H1 (cell line): ENCODE measurements at regions of chr11 and their contacts with region 1.

Region 1: DNA sequence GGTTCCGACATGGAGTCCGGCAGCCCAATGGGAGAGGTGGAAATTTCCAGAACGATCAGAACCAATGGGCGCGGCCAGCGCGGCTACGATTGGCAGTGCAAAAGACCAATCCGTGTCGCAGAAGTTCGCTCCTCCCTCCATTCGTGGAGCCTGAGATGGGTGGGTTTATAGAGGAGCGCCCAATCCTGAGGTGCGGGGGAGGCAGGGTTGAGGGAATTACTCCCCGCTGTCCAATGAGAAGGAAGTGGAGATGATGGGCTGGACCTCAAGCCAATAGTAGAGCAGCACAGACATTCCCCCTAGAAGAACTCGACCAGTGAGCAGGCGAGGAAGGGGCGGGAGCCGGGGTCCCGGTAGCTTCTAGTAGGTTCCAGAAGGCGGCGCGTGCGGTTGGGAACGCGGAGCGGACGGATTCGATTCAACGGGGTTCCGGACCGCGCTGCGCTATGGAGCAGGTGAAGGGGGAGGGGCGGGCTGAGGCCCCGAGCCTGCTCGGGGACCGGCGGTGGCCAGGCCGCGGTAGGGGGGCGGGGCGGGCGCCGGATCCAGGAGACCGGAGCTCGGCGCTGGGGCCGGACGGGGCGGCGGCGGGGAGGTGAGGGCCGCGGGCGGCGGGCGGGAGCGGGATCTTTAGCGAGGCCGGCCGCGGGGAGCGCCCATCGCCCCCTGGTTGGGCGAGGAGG is at the start of gene STIP1:
- DNase-seq: peak; percentile 99 to 100
- H3K4me3 ChIP-seq: peak within 1 kb of the TSS; percentile 55 to 87 (median 77)
- H3K27ac ChIP-seq: peak within 1 kb of the TSS; percentile 87
- H3K4me1 ChIP-seq: peaks cover 0 to 9% (median 4%) of the 10 kb centered on the region in 4 experiments; a peak in 6 of 7 replicates
- H3K27me3 ChIP-seq: no peaks in the 10 kb centered on the region
- CTCF ChIP-seq: peak; percentile 35 to 50 (median 42)
- EP300 ChIP-seq: 0 out of 3 replicates have a peak, but pooled peaks of 1 of the 2 experiments have one; percentile 9
- POLR2A ChIP-seq: peak in 1 of 2 experiments; percentile 47; a peak in 2 of 3 replicates
- RAD21 ChIP-seq: peak in 1 of 2 experiments; percentile 23; a peak in 1 of 4 replicates
- total RNA-seq, gene STIP1: 316 and 329 TPM in 2 replicates

Region 2: DNA sequence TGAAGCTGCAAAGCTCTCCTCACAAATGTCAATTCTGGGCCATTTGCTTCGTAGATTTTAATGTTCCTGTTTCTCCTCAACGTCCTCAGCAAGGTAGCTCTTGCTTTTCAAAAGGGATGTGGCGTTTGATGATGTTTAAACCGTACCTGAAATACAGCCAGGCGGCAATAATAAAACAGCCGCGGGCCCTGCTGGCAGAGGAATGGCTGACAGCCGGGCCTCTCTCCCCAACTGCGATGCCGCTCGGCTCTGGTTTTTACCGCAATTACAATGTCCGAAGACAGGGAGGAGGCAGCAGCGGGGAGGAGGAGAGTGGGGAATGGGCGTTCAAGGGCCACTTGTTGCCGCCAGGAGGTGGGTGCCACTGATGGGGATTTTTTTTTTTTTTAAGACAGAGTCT is 47.6 kb before region 1 on chr11:
- CTCF ChIA-PET with region 1: no interaction called
- POLR2A ChIA-PET with region 1: no interaction called
- DNase-seq: no peak
- H3K4me3 ChIP-seq: no peak overlapping the region
- H3K27ac ChIP-seq: no peak overlapping the region
- H3K4me1 ChIP-seq: no peaks in the 10 kb centered on the region; a peak in 1 of 7 replicates
- H3K27me3 ChIP-seq: peaks cover 0 to 63% (median 24%) of the 10 kb centered on the region in 4 experiments; a peak in 6 of 7 replicates
- CTCF ChIP-seq: no peak
- EP300 ChIP-seq: no peak
- POLR2A ChIP-seq: no peak
- RAD21 ChIP-seq: no peak

Region 3: DNA sequence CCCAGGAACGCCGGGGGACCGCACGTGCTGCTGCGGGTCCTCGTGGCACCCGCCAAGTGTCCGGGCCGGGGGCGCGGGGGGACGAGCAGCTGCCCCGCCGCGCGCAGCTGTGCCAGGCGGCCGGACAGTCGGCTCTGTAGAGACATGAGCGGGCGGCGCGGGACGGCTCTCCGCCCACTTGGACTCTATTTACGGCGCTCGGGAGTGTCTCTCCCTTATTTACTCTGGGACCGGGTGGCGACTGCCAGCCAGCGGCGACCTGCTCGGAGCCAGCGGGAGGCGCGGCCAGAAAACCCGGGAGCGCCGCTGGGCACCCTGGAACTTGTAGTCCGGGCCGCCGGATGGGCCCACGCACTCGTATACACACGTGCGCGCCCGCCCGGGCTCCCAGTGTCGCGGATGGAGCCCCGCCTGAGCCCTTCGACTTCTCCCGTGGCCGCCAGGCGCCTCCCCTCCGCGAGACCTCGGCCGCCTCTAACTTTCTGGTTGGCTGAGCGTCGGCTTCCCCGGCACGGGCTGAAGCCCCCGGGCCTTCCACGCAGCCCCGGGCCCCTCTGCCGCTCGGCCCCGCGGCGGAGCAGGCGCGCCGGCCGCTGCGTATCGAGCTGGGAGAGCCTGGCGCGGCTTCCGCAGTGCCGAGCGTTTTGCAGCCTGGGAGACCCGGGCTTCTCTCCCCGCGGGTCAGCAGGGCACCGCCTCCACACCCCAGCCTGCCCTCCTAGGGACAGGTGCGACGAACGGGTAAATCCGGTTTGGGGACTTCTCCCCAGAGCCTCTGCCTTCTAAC is 19.9 kb before region 1 on chr11 and contains the start of gene MACROD1:
- CTCF ChIA-PET with region 1: interaction called, 4 read pairs
- POLR2A ChIA-PET with region 1: interaction called, 35 read pairs
- DNase-seq: peak in 1 of 2 experiments; percentile 84
- H3K4me3 ChIP-seq: peak within 1 kb of the TSS; percentile 52 to 77 (median 64)
- H3K27ac ChIP-seq: no peak within 1 kb of the TSS
- H3K4me1 ChIP-seq: peaks cover 0 to 11% (median 9%) of the 10 kb centered on the region in 4 experiments; a peak in 6 of 7 replicates
- H3K27me3 ChIP-seq: peaks cover 0 to 3% (median 0%) of the 10 kb centered on the region in 4 experiments; a peak in 2 of 7 replicates
- CTCF ChIP-seq: no peak
- EP300 ChIP-seq: peak in 1 of 2 experiments; percentile 60; a peak in 1 of 3 replicates
- POLR2A ChIP-seq: peak in 1 of 2 experiments; percentile 52; a peak in 1 of 3 replicates
- RAD21 ChIP-seq: peak in 1 of 2 experiments; percentile 9; a peak in 1 of 4 replicates
- total RNA-seq, gene MACROD1: 19.5 and 19.6 TPM in 2 replicates

Region 4: DNA sequence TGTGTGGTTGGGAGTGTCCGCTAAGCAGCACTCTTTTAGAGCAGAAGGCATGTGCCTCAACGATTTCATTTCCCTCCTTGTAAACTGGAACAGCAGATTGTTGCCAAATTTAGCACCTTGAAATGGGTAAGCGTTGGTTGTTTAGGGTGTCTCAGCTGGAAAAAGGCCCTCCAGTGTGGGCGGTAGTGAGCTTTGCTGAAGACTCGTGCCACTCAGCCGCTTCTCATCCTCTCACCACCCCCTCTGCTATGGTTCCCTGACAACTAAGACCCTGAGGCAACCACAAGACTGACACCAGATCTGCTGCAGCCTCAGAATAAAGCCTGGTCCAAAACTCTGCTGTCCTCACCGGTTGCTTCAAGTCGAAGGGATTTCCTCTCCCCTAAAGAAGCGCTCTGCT is 10.7 kb after region 1 on chr11:
- CTCF ChIA-PET with region 1: interaction called, 4 read pairs
- POLR2A ChIA-PET with region 1: interaction called, 186 read pairs
- DNase-seq: no peak
- H3K4me3 ChIP-seq: no peak overlapping the region
- H3K27ac ChIP-seq: no peak overlapping the region
- H3K4me1 ChIP-seq: no peaks in the 10 kb centered on the region
- H3K27me3 ChIP-seq: no peaks in the 10 kb centered on the region
- CTCF ChIP-seq: no peak
- EP300 ChIP-seq: no peak
- POLR2A ChIP-seq: no peak
- RAD21 ChIP-seq: no peak

Region 5: GRCh38 chr11:64216879-64217278 is 30.9 kb after region 1 on chr11:
- CTCF ChIA-PET with region 1: interaction called, 3 read pairs
- POLR2A ChIA-PET with region 1: interaction called, 186 read pairs
- DNase-seq: no peak
- H3K4me3 ChIP-seq: no peak overlapping the region
- H3K27ac ChIP-seq: no peak overlapping the region
- H3K4me1 ChIP-seq: no peaks in the 10 kb centered on the region
- H3K27me3 ChIP-seq: no peaks in the 10 kb centered on the region
- CTCF ChIP-seq: peak in 2 of 3 experiments; percentile 8 to 10; a peak in 2 of 4 replicates
- EP300 ChIP-seq: no peak
- POLR2A ChIP-seq: no peak
- RAD21 ChIP-seq: no peak

Region 6: GRCh38 chr11:64240394-64241174 is 54.6 kb after region 1 on chr11 and contains the start of gene FKBP2:
- CTCF ChIA-PET with region 1: interaction called, 4 read pairs
- POLR2A ChIA-PET with region 1: interaction called, 31 read pairs
- DNase-seq: peak; percentile 88 to 97
- H3K4me3 ChIP-seq: peak within 1 kb of the TSS; percentile 67 to 82 (median 78)
- H3K27ac ChIP-seq: peak within 1 kb of the TSS; percentile 87
- H3K4me1 ChIP-seq: peaks cover 0 to 16% (median 12%) of the 10 kb centered on the region in 4 experiments; a peak in 6 of 7 replicates
- H3K27me3 ChIP-seq: no peaks in the 10 kb centered on the region; a peak in 2 of 7 replicates
- CTCF ChIP-seq: no peak; a peak in 1 of 4 replicates
- EP300 ChIP-seq: no peak
- POLR2A ChIP-seq: peak in 1 of 2 experiments; percentile 81; a peak in 2 of 3 replicates
- RAD21 ChIP-seq: no peak
- total RNA-seq, gene FKBP2: 41.7 and 43.2 TPM in 2 replicates

Region 7: GRCh38 chr11:64317957-64318693 is 132.2 kb after region 1 on chr11 and contains the start of gene PRDX5:
- CTCF ChIA-PET with region 1: no interaction called
- POLR2A ChIA-PET with region 1: interaction called, 11 read pairs
- DNase-seq: peak in 1 of 2 experiments; percentile 90
- H3K4me3 ChIP-seq: peak within 1 kb of the TSS; percentile 73 to 80 (median 77)
- H3K27ac ChIP-seq: peak within 1 kb of the TSS; percentile 91
- H3K4me1 ChIP-seq: peaks cover 1 to 12% (median 3%) of the 10 kb centered on the region in 4 experiments; a peak in 6 of 7 replicates
- H3K27me3 ChIP-seq: no peaks in the 10 kb centered on the region
- CTCF ChIP-seq: peak in 1 of 3 experiments; percentile 51; a peak in 2 of 4 replicates
- EP300 ChIP-seq: no peak
- POLR2A ChIP-seq: no peak
- RAD21 ChIP-seq: peak; percentile 39 to 62
- total RNA-seq, gene PRDX5: 201 and 225 TPM in 2 replicates

Region 8: GRCh38 chr11:64472593-64473455 is 286.9 kb after region 1 on chr11:
- CTCF ChIA-PET with region 1: no interaction called
- POLR2A ChIA-PET with region 1: no interaction called
- DNase-seq: peak in 1 of 2 experiments; percentile 14
- H3K4me3 ChIP-seq: no peak overlapping the region
- H3K27ac ChIP-seq: no peak overlapping the region
- H3K4me1 ChIP-seq: peaks cover 0 to 8% (median 3%) of the 10 kb centered on the region in 4 experiments; a peak in 4 of 7 replicates
- H3K27me3 ChIP-seq: peaks cover 0 to 3% (median 2%) of the 10 kb centered on the region in 4 experiments; a peak in 3 of 7 replicates
- CTCF ChIP-seq: no peak
- EP300 ChIP-seq: no peak
- POLR2A ChIP-seq: no peak
- RAD21 ChIP-seq: no peak